Thyroid gland (tissue), 4 donors: ENCODE measurements at regions of chr21 and their contacts with region 1.

Region 1: GRCh38 chr21:38733973-38734546 is 71.7 kb upstream of the ETS2 start:
- DNase-seq: peak; percentile 86 to 88
- H3K4me3 ChIP-seq: peak overlapping the region in 1 of 3 donors; percentile 0
- H3K27ac ChIP-seq: peak overlapping the region in 2 of 3 donors; percentile 24 to 44
- H3K4me1 ChIP-seq: peaks cover 0 to 7% of the 10 kb centered on the region in 2 donors
- H3K27me3 ChIP-seq: no peaks in the 10 kb centered on the region
- CTCF ChIP-seq: peak; percentile 84 to 97 (median 93)
- POLR2A ChIP-seq: no peak

Region 2: DNA sequence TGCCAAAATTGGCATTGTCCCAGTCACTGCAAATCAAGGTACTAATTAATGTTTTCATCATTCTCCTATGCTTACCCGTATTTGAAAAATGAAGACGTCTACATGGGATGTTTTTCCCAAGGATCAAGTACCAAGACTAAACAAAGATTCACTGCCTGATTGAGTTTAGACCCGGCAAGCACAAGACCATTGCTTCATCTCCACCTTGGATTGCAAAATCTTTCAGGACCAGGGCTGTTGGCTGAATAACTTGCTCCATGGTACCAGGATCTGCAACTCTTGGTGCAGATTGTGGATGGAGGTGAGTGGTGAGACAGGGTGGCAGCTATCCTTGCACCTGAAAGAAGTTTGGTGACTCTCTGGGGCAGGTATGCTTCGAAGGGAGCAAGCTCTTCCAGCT is 50.8 kb before region 1 on chr21:
- intact Hi-C with region 1: no loop called
- DNase-seq: no peak
- H3K4me3 ChIP-seq: no peak overlapping the region
- H3K27ac ChIP-seq: no peak overlapping the region
- H3K4me1 ChIP-seq: no peaks in the 10 kb centered on the region
- H3K27me3 ChIP-seq: no peaks in the 10 kb centered on the region
- CTCF ChIP-seq: no peak
- POLR2A ChIP-seq: no peak

Region 3: DNA sequence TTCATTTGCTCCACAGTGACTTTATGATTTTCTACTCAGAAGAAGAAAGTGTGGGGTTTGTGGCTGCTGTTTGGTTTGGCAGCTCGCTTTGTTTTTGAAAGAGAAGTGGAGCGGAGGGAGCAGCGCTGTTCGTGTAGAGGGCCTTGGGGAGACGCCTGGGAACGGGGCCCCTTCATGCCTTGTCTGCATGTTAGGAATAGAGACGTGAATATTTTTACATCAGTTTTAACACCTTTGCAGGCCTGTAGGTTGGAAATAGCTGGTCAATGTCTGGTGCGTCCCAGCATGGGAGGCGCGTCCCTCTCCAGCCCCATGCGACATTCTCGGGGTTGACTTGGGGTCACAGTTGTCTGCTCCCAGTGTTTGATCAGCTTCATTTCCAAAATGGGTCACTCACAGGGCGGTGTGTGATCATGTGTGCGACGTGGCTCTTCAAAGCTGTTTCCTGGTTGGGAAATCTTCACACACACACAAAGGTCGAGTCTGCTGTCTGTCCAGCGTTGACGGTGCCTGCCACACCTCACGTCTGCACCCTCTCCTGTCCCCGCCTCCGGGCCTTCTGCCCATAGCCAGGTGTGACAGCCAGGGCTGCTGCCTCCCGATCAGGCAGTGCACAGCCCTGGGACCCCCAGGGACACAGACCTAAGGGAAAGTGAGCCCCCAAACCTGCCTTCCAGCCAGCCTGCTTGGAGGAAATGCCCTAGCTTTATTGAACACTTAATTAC is 300.0 kb after region 1 on chr21:
- intact Hi-C with region 1: loop called (anchors 10 kb)
- DNase-seq: peak; percentile 93 to 95
- H3K4me3 ChIP-seq: no peak overlapping the region
- H3K27ac ChIP-seq: peak overlapping the region; percentile 87 to 95 (median 94)
- H3K4me1 ChIP-seq: peaks cover 31 to 39% of the 10 kb centered on the region in 2 donors
- H3K27me3 ChIP-seq: no peaks in the 10 kb centered on the region
- CTCF ChIP-seq: peak in 2 of 6 experiments; percentile 30 to 32
- POLR2A ChIP-seq: peak in 1 of 2 donors; percentile 40

Region 4: GRCh38 chr21:39137248-39138178 is 403.5 kb after region 1 on chr21:
- intact Hi-C with region 1: loop called (anchors 5 kb)
- DNase-seq: no peak
- H3K4me3 ChIP-seq: no peak overlapping the region
- H3K27ac ChIP-seq: no peak overlapping the region
- H3K4me1 ChIP-seq: no peaks in the 10 kb centered on the region
- H3K27me3 ChIP-seq: no peaks in the 10 kb centered on the region
- CTCF ChIP-seq: no peak
- POLR2A ChIP-seq: no peak